PC-3 (cell line): ENCODE measurements at regions of chr17 and their contacts with region 1.

Region 1: GRCh38 chr17:1648963-1649843 is 463 bp downstream of the RILP start:
- DNase-seq: peak; percentile 94
- ATAC-seq: peak; percentile 65
- H3K4me3 ChIP-seq: peak overlapping the region; percentile 76
- H3K27ac ChIP-seq: peak overlapping the region; percentile 79
- H3K4me1 ChIP-seq: peaks cover 19% of the 10 kb centered on the region
- H3K27me3 ChIP-seq: no peaks in the 10 kb centered on the region
- CTCF ChIP-seq: no peak; the same call in 1 of the 2 replicates

Region 2: DNA sequence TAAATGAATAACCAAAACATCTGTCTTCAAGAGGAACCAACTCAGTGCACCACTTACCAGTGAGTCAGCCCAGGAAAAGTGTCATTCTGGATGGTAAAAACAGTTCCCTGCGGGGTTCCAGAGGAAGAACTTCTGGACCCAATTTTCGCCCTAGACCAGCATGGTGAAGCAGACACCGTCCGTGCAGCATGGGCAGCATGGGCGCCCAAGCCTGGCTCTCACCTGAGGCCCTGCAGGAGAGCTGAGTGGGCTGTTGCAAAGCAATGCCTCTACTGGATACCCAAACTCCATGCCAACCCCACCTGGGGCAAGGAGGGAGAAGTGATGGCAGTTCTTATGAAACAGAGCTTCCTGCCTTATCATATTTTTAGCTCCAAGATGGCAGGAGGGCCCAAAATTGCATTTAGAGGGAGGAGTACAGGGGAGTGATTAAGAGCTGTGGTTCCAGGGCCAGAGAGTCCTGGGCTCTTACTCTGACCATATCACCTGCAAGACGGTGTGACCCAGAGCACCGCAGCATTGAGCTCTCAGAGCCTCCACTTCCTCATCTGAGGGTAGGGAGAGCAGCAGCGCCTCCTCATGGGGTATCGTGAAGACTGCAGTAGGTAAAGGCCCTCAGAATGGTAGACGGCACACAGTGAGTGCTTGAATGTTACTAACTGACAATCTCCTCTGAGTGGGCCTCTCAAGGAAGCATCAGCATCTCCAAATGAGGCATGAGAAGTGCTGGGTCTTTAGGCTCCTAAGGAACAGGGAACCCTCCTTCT is 116.2 kb before region 1 on chr17:
- CTCF ChIA-PET with region 1: no interaction called
- POLR2A ChIA-PET with region 1: no interaction called
- intact Hi-C with region 1: no loop called
- DNase-seq: peak; percentile 3
- ATAC-seq: no peak
- H3K4me3 ChIP-seq: no peak overlapping the region
- H3K27ac ChIP-seq: no peak overlapping the region
- H3K4me1 ChIP-seq: no peaks in the 10 kb centered on the region
- H3K27me3 ChIP-seq: no peaks in the 10 kb centered on the region
- CTCF ChIP-seq: peak; percentile 45

Region 3: DNA sequence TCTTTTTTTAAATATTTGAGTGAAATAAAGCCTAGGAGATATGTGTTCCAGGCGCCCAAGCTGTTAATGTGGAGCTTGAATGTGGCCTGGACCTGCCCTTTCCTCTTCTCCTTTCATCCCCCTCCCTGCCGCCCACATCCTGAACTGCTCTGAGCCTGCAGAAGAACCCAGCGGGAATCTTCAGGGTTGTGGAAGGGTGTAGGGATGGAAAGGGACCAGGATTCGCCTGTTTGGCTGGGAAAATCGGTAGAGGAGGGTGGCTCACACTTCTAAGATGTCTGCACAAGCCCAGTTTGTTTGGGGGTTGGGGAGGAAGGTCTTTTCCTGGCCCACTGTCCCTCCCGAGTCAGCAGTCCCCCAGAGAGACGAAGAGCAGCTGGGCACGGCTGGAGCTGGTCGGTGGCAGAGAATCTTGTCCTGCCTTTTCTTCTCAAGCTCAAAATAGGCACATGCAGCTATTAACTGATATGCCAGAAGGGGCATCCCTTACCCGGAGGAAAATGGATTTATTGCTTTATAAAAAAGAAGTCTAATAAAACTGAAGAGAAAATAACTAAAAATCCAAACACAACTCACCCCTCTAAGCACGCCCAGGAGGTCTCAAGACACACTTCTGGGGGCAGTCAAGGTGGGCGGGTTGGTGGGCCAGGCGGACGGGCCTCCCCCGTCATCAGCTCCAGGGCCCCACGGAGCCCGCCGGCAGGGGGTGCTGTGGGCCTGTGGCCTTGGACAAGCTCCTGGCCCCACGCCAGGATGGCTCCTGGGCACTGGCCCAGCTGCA is 75.1 kb before region 1 on chr17:
- CTCF ChIA-PET with region 1: interaction called, 24 read pairs
- POLR2A ChIA-PET with region 1: interaction called, 9 read pairs
- intact Hi-C with region 1: no loop called
- DNase-seq: peak; percentile 78
- ATAC-seq: peak; percentile 57
- H3K4me3 ChIP-seq: no peak overlapping the region
- H3K27ac ChIP-seq: no peak overlapping the region
- H3K4me1 ChIP-seq: peaks cover 10% of the 10 kb centered on the region
- H3K27me3 ChIP-seq: no peaks in the 10 kb centered on the region
- CTCF ChIP-seq: peak; percentile 78

Region 4: GRCh38 chr17:1673041-1673785 is 24.0 kb after region 1 on chr17:
- CTCF ChIA-PET with region 1: interaction called, 10 read pairs
- POLR2A ChIA-PET with region 1: no interaction called
- intact Hi-C with region 1: no loop called
- DNase-seq: no peak
- ATAC-seq: no peak
- H3K4me3 ChIP-seq: no peak overlapping the region
- H3K27ac ChIP-seq: no peak overlapping the region
- H3K4me1 ChIP-seq: no peaks in the 10 kb centered on the region
- H3K27me3 ChIP-seq: no peaks in the 10 kb centered on the region
- CTCF ChIP-seq: no peak

Region 5: GRCh38 chr17:1716076-1716995 is 67.1 kb after region 1 on chr17:
- CTCF ChIA-PET with region 1: interaction called, 15 read pairs
- POLR2A ChIA-PET with region 1: interaction called, 18 read pairs
- intact Hi-C with region 1: loop called (anchors 2 kb)
- DNase-seq: peak; percentile 99
- ATAC-seq: peak; percentile 70
- H3K4me3 ChIP-seq: peak overlapping the region; percentile 81
- H3K27ac ChIP-seq: peak overlapping the region; percentile 100
- H3K4me1 ChIP-seq: peaks cover 33% of the 10 kb centered on the region
- H3K27me3 ChIP-seq: no peaks in the 10 kb centered on the region
- CTCF ChIP-seq: no peak

Region 6: DNA sequence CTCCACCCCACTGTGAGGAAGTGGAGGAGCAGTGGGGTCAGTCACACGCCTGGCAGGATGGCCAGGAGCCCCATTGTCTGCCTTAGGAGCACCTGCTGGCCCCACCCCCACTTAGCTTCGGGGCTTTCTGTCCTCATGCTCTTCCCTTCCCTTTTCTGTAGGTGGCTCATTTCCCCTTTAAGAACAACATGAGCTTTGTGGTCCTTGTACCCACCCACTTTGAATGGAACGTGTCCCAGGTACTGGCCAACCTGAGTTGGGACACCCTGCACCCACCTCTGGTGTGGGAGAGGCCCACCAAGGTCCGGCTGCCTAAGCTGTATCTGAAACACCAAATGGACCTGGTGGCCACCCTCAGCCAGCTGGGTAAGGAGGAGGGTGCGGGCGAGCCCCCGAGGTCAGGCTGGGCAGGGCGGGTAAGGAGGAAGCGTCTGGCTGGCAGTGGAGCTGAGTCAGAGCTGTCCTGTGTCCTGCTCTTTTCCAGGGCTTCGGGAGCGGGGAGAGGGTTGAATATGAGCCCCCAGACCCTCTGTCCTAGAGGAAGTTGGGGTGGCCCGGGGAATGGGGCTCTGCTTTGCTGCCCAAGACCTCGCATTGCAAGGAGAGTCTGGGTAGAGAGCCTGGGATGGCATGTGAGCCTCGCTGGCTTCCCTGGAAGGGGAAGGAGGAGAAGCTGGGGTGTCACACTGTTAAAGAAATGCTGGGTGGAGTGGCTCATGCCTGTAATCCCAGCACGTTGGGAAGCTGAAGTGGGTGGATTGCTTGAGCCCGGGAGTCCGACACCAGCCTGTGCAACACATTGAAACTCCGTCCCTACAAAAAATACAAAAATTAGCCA is 103.4 kb after region 1 on chr17:
- CTCF ChIA-PET with region 1: no interaction called
- POLR2A ChIA-PET with region 1: interaction called, 10 read pairs
- intact Hi-C with region 1: no loop called
- DNase-seq: peak; percentile 41
- ATAC-seq: peak; percentile 90
- H3K4me3 ChIP-seq: peak overlapping the region; percentile 56
- H3K27ac ChIP-seq: no peak overlapping the region
- H3K4me1 ChIP-seq: peaks cover 14% of the 10 kb centered on the region
- H3K27me3 ChIP-seq: no peaks in the 10 kb centered on the region
- CTCF ChIP-seq: no peak

Region 7: DNA sequence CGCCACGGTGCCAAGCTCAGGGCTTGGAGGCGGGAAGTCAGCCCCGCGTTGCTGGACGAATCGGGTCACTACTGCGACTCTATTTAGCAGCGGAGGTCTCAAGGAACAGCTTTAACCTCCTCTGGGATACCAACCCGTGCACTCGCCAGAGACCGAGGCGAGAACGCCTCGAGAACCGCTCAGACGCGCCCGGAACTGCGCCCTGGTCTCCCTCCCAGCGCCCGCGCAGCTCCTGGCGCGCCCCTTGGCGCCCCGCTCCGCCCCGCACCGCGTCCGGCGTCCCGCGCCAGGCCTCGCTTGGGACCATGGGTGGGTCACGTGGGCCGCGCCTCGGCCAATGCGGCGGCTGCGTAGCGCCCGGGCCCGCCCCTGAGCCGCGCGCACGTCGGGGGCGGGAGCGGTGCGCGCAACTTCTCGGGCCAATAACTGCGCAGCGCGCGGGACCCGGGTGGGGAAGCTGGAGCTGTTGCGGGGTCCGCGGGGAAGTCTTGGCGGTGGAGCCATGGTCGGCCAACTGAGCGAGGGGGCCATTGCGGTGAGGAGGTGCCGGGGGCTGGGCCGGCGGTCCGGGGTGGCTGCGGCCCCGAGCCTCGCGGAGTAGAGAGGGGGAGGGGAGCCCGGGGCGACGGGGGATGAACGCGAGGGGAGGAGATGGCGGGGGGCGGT is 180.5 kb after region 1 on chr17 and contains the starts of genes RPA1 and SMYD4:
- CTCF ChIA-PET with region 1: no interaction called
- POLR2A ChIA-PET with region 1: no interaction called
- intact Hi-C with region 1: loop called (anchors 2 kb)
- DNase-seq: peak; percentile 90
- ATAC-seq: peak; percentile 99
- H3K4me3 ChIP-seq: peak within 1 kb of the TSS; percentile 74
- H3K27ac ChIP-seq: no peak within 1 kb of the TSS
- H3K4me1 ChIP-seq: peaks cover 9% of the 10 kb centered on the region
- H3K27me3 ChIP-seq: no peaks in the 10 kb centered on the region
- CTCF ChIP-seq: no peak
- total RNA-seq, gene RPA1: 69.1 and 75.5 TPM in 2 replicates
- total RNA-seq, gene SMYD4: 8.1 and 9.3 TPM in 2 replicates

Region 8: GRCh38 chr17:2401426-2402221 is 752.4 kb after region 1 on chr17:
- CTCF ChIA-PET with region 1: no interaction called
- POLR2A ChIA-PET with region 1: interaction called, 10 read pairs
- intact Hi-C with region 1: no loop called
- DNase-seq: peak; percentile 97
- ATAC-seq: peak; percentile 38
- H3K4me3 ChIP-seq: peak overlapping the region; percentile 98
- H3K27ac ChIP-seq: peak overlapping the region; percentile 95
- H3K4me1 ChIP-seq: peaks cover 56% of the 10 kb centered on the region
- H3K27me3 ChIP-seq: no peaks in the 10 kb centered on the region
- CTCF ChIP-seq: no peak